HEK293 (cell line): ENCODE measurements at regions of chr14 and their contacts with region 1.

Region 1: GRCh38 chr14:36520601-36521525 is 831 bp upstream of the NKX2-1 start:
- H3K4me3 ChIP-seq: peak overlapping the region; percentile 59
- H3K27ac ChIP-seq: peak overlapping the region; percentile 61; the same call in 1 of the 2 replicates
- H3K4me1 ChIP-seq: no peaks in the 10 kb centered on the region
- CTCF ChIP-seq: peak; percentile 72

Region 2: DNA sequence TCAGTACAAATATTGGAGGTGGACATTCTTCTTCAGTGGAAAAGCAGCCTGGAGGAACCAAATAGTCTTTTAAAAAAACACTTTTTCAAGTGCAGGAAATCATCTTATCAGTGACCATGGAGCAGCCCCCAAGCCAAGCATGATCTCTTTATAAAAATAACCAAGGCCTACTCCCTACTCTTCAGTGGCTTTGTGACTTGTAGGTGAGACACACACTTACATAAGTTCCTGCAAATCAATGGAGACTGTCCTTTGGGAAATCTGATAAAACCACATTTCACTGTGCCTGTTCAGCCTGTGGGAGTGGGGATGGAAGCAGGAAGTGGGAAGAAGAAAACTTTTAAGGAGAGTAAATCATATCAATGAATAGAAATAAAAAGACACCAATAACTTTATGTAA is 256.8 kb before region 1 on chr14:
- CTCF ChIA-PET with region 1: no interaction called
- POLR2A ChIA-PET with region 1: no interaction called
- H3K4me3 ChIP-seq: no peak overlapping the region
- H3K27ac ChIP-seq: no peak overlapping the region
- H3K4me1 ChIP-seq: peaks cover 12% of the 10 kb centered on the region
- CTCF ChIP-seq: no peak

Region 3: GRCh38 chr14:36538051-36538450 is 17.2 kb after region 1 on chr14:
- CTCF ChIA-PET with region 1: interaction called, 22 read pairs
- POLR2A ChIA-PET with region 1: no interaction called
- H3K4me3 ChIP-seq: no peak overlapping the region
- H3K27ac ChIP-seq: no peak overlapping the region
- H3K4me1 ChIP-seq: no peaks in the 10 kb centered on the region
- CTCF ChIP-seq: no peak